Activated T-helper 1 cell treated with anti-CD3 and anti-CD28 coated beads, Interleukin-12 subunit alpha, Interleukin-12 subunit beta, Interleukin-2, Interleukin-4 antibody, amounts not matched to agents 30 ng/mL and 10 ng/mL and 1 ng/mL, durations not matched to agents 14 hours and 24 hours and 36 hours (primary cell): ENCODE measurements at regions of chr2 and their contacts with region 1.

Region 1: GRCh38 chr2:206442833-206443734 is at the start of gene ADAM23:
- DNase-seq: peak; percentile 26
- H3K4me3 Mint-ChIP-seq: peak within 1 kb of the TSS; percentile 77
- H3K27ac Mint-ChIP-seq: peak within 1 kb of the TSS; percentile 73
- H3K4me1 Mint-ChIP-seq: peaks cover 12% of the 10 kb centered on the region
- H3K27me3 Mint-ChIP-seq: peaks cover 61% of the 10 kb centered on the region
- total RNA-seq, gene ADAM23: 0.15 and 0.16 TPM in 2 replicates

Region 2: GRCh38 chr2:206274434-206275268 is 168.4 kb before region 1 on chr2 and contains the start of gene ZDBF2:
- intact Hi-C with region 1: loop called (anchors 5 kb)
- DNase-seq: peak; percentile 46
- H3K4me3 Mint-ChIP-seq: peak within 1 kb of the TSS; percentile 87
- H3K27ac Mint-ChIP-seq: peak within 1 kb of the TSS; percentile 86
- H3K4me1 Mint-ChIP-seq: peaks cover 27% of the 10 kb centered on the region
- H3K27me3 Mint-ChIP-seq: peaks cover 48% of the 10 kb centered on the region
- total RNA-seq, gene ZDBF2: 9.3 and 11.4 TPM in 2 replicates